Head of caudate nucleus (tissue), 42 donors: ENCODE measurements at regions of chr1 and their contacts with region 1.

Region 1: DNA sequence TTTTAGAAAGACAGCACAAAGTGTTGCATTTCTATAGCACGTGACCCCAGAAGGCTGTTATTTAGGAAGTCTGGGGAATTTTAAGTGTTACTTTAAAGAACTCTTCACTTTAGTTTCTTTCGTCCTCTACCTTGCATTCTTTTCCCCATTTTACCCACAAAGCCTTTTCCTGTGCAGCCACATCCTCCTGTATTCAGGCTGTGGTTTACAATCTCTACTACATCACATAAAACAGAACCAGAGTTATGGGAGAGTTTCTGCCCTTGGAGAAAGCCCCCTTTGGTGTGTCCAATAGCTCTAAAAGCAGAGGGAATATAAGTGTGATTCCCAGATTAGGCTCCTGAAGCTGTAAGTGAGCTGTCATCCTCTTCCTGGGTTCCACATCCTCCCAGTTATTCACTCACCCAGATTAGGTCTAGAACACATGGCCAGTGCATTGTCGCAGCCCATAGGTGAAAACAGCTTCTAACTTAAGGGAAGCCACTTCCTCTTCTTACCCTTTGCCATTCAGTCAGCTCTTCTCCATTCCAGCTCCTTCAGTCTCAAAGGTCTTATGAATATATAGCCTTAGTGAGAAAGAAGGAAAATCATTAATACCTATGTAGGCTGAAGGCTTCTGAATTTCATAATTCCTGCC is 171.1 kb downstream of the PIGK start:
- DNase-seq: no peak

Region 2: GRCh38 chr1:76759950-76760349 is 288.1 kb before region 1 on chr1:
- intact Hi-C with region 1: no loop called
- DNase-seq: peak in 2 of 42 donors; percentile 6 to 25

Region 3: GRCh38 chr1:76998582-76999223 is 49.4 kb before region 1 on chr1:
- intact Hi-C with region 1: no loop called
- DNase-seq: no peak

Region 4: DNA sequence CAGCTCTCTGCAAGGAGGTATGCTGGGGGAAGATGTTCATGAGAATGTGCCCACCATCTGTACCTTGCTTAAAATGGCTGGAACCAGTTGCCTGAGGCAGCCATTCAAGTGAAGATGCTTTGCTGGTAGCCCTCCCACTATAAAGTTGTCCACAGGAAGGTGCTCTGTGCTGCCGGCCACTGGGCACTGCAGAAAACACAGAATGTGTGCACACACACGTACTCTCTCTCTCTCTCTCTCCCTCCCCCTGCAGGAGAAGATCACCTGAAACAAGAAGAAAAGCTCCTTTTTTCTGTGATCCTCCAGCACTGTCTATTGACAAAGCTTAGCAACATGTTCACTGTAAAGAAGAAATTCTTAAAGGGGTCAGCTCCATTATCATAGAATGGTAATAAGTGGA is 36.4 kb after region 1 on chr1:
- intact Hi-C with region 1: no loop called
- DNase-seq: no peak

Region 5: GRCh38 chr1:77095233-77095632 is 47.1 kb after region 1 on chr1:
- intact Hi-C with region 1: loop called (anchors 5 kb)
- DNase-seq: no peak